ENCODE measurements at regions of chr1 and their contacts with region 1.

Region 1: GRCh38 chr1:100866041-100866900 is 28.4 kb downstream of the EXTL2 start:
- DNase-seq: peak in 1 of 2 donors; percentile 54
- ATAC-seq: peak; percentile 35 to 53 (median 42)
- H3K4me3 ChIP-seq: no peak overlapping the region
- H3K4me3 Mint-ChIP-seq: no peak overlapping the region
- H3K27ac ChIP-seq: no peak overlapping the region
- H3K27ac Mint-ChIP-seq: no peak overlapping the region
- H3K4me1 ChIP-seq: no peaks in the 10 kb centered on the region
- H3K4me1 Mint-ChIP-seq: no peaks in the 10 kb centered on the region
- H3K27me3 ChIP-seq: no peaks in the 10 kb centered on the region
- H3K27me3 Mint-ChIP-seq: no peaks in the 10 kb centered on the region
- CTCF ChIP-seq: peak; percentile 64

Region 2: GRCh38 chr1:99808391-99809115 is 1057.7 kb before region 1 on chr1:
- intact Hi-C with region 1: loop called (anchors 1 kb)
- DNase-seq: peak in 1 of 2 donors; percentile 82
- ATAC-seq: peak; percentile 78 to 90 (median 88)
- H3K4me3 ChIP-seq: no peak overlapping the region
- H3K4me3 Mint-ChIP-seq: no peak overlapping the region
- H3K27ac ChIP-seq: no peak overlapping the region
- H3K27ac Mint-ChIP-seq: no peak overlapping the region
- H3K4me1 ChIP-seq: no peaks in the 10 kb centered on the region
- H3K4me1 Mint-ChIP-seq: no peaks in the 10 kb centered on the region
- H3K27me3 ChIP-seq: no peaks in the 10 kb centered on the region
- H3K27me3 Mint-ChIP-seq: peaks cover 7 to 8% of the 10 kb centered on the region in 2 donors
- CTCF ChIP-seq: peak; percentile 84

Region 3: GRCh38 chr1:100459358-100460114 is 406.7 kb before region 1 on chr1:
- intact Hi-C with region 1: loop called (anchors 1 kb)
- DNase-seq: peak; percentile 56 to 87
- ATAC-seq: peak; percentile 88 to 89 (median 88)
- H3K4me3 ChIP-seq: no peak overlapping the region
- H3K4me3 Mint-ChIP-seq: no peak overlapping the region
- H3K27ac ChIP-seq: no peak overlapping the region
- H3K27ac Mint-ChIP-seq: peak overlapping the region; percentile 47 to 71
- H3K4me1 ChIP-seq: peaks cover 7% of the 10 kb centered on the region
- H3K4me1 Mint-ChIP-seq: peaks cover 21 to 25% of the 10 kb centered on the region in 2 donors
- H3K27me3 ChIP-seq: no peaks in the 10 kb centered on the region
- H3K27me3 Mint-ChIP-seq: no peaks in the 10 kb centered on the region
- CTCF ChIP-seq: peak; percentile 82

Region 4: DNA sequence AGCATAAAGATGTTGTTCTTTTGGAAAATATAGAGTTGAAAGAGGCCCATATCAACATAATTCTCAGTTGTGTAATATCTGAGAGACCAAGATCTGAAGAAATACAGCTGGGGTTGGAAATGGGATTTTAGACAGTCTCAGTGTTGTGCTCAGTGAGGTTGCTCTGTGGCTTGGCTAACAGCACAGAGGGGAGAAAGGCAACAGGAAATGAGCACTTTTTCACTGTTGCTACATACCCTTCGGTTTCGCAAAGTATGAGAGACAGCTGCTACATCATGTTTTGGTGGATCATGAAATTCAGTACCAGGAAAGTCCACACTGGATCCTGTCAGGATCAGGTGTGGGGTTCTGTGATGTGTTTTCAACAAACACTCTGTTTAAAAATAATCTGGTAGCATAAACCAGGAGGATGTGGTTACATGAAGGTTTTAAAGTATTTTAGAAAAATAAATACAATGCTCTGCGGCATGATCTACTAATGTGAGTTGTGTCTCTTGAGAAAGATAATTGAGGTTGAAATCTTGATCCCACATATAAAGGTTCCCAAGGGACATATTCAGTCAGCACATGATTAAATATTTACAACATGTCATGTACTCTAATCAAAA is 335.3 kb before region 1 on chr1:
- intact Hi-C with region 1: loop called (anchors 5 kb)
- DNase-seq: peak in 1 of 2 donors; percentile 56
- ATAC-seq: peak; percentile 91 to 97 (median 96)
- H3K4me3 ChIP-seq: no peak overlapping the region
- H3K4me3 Mint-ChIP-seq: peak overlapping the region; percentile 13
- H3K27ac ChIP-seq: no peak overlapping the region
- H3K27ac Mint-ChIP-seq: peak overlapping the region; percentile 52 to 65
- H3K4me1 ChIP-seq: peaks cover 27% of the 10 kb centered on the region
- H3K4me1 Mint-ChIP-seq: peaks cover 12 to 28% of the 10 kb centered on the region in 2 donors
- H3K27me3 ChIP-seq: no peaks in the 10 kb centered on the region
- H3K27me3 Mint-ChIP-seq: peaks cover 7 to 16% of the 10 kb centered on the region in 2 donors
- CTCF ChIP-seq: no peak

Region 5: DNA sequence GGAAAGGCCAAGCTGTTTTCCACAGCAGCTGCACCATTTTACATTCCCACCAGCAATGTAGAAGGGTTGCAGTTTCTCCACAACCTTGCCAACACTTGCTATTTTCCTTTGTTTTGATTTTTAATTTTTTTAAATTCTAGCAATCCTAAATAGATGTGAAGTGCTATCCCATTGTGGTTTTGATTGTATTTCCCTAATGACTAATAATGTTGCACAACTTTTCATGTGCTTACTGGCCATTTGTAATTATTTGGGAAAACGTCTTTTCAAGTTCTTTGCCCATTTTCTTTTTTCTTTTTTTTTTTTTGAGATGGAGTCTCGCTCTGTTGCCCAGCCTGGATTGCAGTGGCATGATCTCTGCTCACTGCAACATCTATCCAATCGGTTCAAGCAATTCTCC is 92.8 kb before region 1 on chr1:
- intact Hi-C with region 1: no loop called
- DNase-seq: no peak
- ATAC-seq: no peak
- H3K4me3 ChIP-seq: no peak overlapping the region
- H3K4me3 Mint-ChIP-seq: no peak overlapping the region
- H3K27ac ChIP-seq: no peak overlapping the region
- H3K27ac Mint-ChIP-seq: no peak overlapping the region
- H3K4me1 ChIP-seq: no peaks in the 10 kb centered on the region
- H3K4me1 Mint-ChIP-seq: no peaks in the 10 kb centered on the region
- H3K27me3 ChIP-seq: no peaks in the 10 kb centered on the region
- H3K27me3 Mint-ChIP-seq: peaks cover 7 to 8% of the 10 kb centered on the region in 2 donors
- CTCF ChIP-seq: no peak

Measured in natural killer cell (primary cell).